Activated CD8-positive, alpha-beta memory T cell treated with anti-CD3 and anti-CD28 coated beads, Interleukin-2, amount 10 ng/mL, durations not matched to agents 7 days and 5 days (primary cell): ENCODE measurements at regions of chr1 and their contacts with region 1.

Region 1: GRCh38 chr1:247487057-247487456 is 29.2 kb upstream of the OR2B11 start:
- DNase-seq: no peak
- ATAC-seq: peak; percentile 53
- H3K4me3 Mint-ChIP-seq: no peak overlapping the region
- H3K27ac Mint-ChIP-seq: no peak overlapping the region
- H3K4me1 Mint-ChIP-seq: no peaks in the 10 kb centered on the region
- H3K27me3 Mint-ChIP-seq: peaks cover 15% of the 10 kb centered on the region

Region 2: DNA sequence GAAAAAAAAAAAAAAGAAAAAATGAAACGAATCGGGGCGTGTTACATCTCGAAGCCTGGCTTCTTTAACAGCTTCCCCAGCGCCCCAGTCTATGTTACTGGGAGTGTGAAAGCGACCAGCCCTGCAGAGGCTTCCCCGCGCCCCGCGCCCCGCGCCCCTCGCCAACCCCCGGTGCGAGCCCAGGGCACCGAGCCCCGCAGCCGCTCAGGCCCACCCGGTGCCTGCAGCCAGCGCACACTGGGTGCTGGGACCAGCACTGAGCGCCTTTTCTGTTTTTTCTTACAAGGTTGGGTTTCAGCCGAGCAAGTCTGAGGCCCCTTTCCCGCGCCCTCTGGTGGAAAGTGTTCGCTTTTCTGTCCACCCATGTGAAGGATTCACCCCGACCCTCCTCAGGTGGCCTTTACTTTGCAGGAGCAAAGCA is 113.3 kb before region 1 on chr1:
- CTCF ChIA-PET with region 1: interaction called, 21 read pairs
- DNase-seq: peak; percentile 67
- ATAC-seq: peak; percentile 78
- H3K4me3 Mint-ChIP-seq: peak overlapping the region; percentile 22
- H3K27ac Mint-ChIP-seq: no peak overlapping the region
- H3K4me1 Mint-ChIP-seq: peaks cover 5% of the 10 kb centered on the region
- H3K27me3 Mint-ChIP-seq: peaks cover 23% of the 10 kb centered on the region